ENCODE measurements at regions of chr13 and their contacts with region 1.

Region 1: GRCh38 chr13:26698392-26699196 is 62.0 kb downstream of the GPR12 start:
- DNase-seq: peak; percentile 87
- H3K4me3 ChIP-seq: peak overlapping the region in 1 of 2 experiments; percentile 15; a peak in 2 of 4 replicates
- H3K27ac ChIP-seq: no peak overlapping the region
- H3K4me1 ChIP-seq: peaks cover 0 to 4% of the 10 kb centered on the region in 2 experiments; a peak in 1 of 4 replicates
- H3K27me3 ChIP-seq: no peaks in the 10 kb centered on the region
- CTCF ChIP-seq: peak; percentile 96
- EP300 ChIP-seq: no peak
- RAD21 ChIP-seq: peak; percentile 100

Region 2: GRCh38 chr13:26186118-26186870 is 512.3 kb before region 1 on chr13:
- CTCF ChIA-PET with region 1: interaction called, 94 read pairs
- POLR2A ChIA-PET with region 1: interaction called, 3 read pairs
- DNase-seq: peak; percentile 90
- H3K4me3 ChIP-seq: peak overlapping the region; percentile 60 to 63
- H3K27ac ChIP-seq: peak overlapping the region; percentile 12 to 25; a peak in 2 of 4 replicates
- H3K4me1 ChIP-seq: peaks cover 0 to 6% of the 10 kb centered on the region in 2 experiments; a peak in 1 of 4 replicates
- H3K27me3 ChIP-seq: no peaks in the 10 kb centered on the region
- CTCF ChIP-seq: peak; percentile 62
- EP300 ChIP-seq: no peak
- RAD21 ChIP-seq: peak; percentile 37; the same call in 1 of the 2 replicates

Region 3: DNA sequence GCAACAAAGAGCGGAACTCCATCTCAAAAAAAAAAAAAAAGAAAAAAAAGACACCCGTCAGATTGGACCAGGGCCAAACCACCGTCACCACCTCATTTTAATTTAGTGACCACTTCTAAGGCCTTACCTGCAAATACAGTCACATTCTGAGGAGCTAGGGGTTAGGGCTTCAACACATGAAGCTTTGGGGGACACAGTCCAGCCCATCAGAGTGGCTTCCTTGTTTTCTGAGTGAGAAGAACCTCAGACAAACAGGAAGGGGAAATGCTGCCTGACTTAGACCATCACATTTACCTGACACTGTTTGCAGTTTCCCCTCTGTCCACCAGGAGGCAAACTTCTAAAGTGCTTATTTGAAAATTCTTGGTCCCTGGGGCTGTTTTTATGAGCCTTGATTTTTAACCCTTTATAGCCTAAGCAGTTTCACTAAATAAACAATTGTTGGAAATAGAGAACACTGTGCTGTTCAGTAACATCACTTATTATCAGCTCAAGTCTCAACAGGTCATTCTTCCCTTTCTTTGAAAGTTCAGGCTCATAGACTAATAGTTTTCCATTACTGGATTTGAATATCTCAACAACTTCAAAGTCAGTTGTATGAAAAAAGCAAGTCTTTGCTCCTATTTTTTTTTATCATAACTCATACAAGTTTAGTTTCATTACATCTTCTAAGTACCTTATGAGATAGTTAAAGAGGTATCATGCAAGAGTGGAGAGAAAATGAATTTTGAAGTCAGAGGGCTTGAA is 216.0 kb before region 1 on chr13:
- CTCF ChIA-PET with region 1: interaction called, 59 read pairs
- POLR2A ChIA-PET with region 1: interaction called, 3 read pairs
- DNase-seq: peak; percentile 81
- H3K4me3 ChIP-seq: peak overlapping the region in 1 of 2 experiments; percentile 7; a peak in 2 of 4 replicates
- H3K27ac ChIP-seq: no peak overlapping the region
- H3K4me1 ChIP-seq: peaks cover 0 to 2% of the 10 kb centered on the region in 2 experiments; a peak in 1 of 4 replicates
- H3K27me3 ChIP-seq: no peaks in the 10 kb centered on the region
- CTCF ChIP-seq: peak; percentile 93
- EP300 ChIP-seq: no peak
- RAD21 ChIP-seq: peak; percentile 73

Region 4: GRCh38 chr13:26557393-26558023 is 141.1 kb before region 1 on chr13 and contains the start of gene WASF3:
- CTCF ChIA-PET with region 1: interaction called, 22 read pairs
- POLR2A ChIA-PET with region 1: no interaction called
- DNase-seq: peak; percentile 99
- H3K4me3 ChIP-seq: peak within 1 kb of the TSS; percentile 80 to 81
- H3K27ac ChIP-seq: peak within 1 kb of the TSS; percentile 10 to 73; a peak in 3 of 4 replicates
- H3K4me1 ChIP-seq: peaks cover 0 to 23% of the 10 kb centered on the region in 2 experiments; a peak in 2 of 4 replicates
- H3K27me3 ChIP-seq: no peaks in the 10 kb centered on the region
- CTCF ChIP-seq: no peak
- EP300 ChIP-seq: no peak
- RAD21 ChIP-seq: no peak
- polyA plus RNA-seq, gene WASF3: 10.4 and 12.8 TPM in 2 replicates

Region 5: DNA sequence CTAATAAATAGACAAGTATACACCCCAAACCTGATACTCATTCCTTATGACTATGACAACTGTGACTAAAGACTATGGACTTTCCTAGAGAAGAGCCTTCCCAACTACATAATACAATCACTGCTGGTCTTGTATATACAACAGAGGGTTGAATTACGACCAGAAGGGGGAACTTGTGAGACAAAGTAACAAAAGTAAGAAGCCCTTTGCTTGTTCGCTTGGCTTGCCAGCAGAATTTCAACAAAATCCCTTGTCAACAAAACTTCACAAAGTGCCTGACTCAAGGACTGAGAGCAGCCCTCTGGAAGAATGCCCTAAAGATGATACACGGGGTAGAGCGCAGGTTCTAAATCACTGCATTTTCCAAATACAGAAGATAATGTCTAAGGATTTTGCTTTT is 41.7 kb before region 1 on chr13:
- CTCF ChIA-PET with region 1: interaction called, 22 read pairs
- POLR2A ChIA-PET with region 1: no interaction called
- DNase-seq: no peak
- H3K4me3 ChIP-seq: no peak overlapping the region
- H3K27ac ChIP-seq: peak overlapping the region in 1 of 2 experiments; percentile 86; a peak in 2 of 4 replicates
- H3K4me1 ChIP-seq: peaks cover 0 to 21% of the 10 kb centered on the region in 2 experiments; a peak in 2 of 4 replicates
- H3K27me3 ChIP-seq: no peaks in the 10 kb centered on the region
- CTCF ChIP-seq: peak; percentile 15; the same call in 1 of the 2 replicates
- EP300 ChIP-seq: no peak
- RAD21 ChIP-seq: 0 out of 2 replicates have a peak, but pooled peaks have one; percentile 15

Region 6: DNA sequence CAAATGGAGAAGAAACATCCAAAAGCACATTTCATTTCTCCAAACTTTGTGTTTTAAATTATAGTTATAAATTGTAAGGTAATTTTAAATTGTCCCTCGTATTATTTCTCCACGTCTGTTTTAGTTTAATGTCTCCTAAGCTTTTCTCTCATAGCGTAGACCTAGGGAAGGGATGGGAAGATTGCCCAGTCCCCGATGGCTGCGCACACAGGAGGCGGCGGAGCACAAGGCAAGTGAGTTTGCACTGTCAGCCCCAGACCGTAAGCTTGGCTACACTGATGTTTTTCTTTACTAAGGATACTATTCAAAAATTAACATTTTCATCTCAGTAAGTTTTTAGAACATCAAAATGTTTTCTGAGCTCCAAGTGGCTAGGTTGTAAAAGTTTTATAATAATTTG is 10.3 kb before region 1 on chr13:
- CTCF ChIA-PET with region 1: interaction called, 25 read pairs
- POLR2A ChIA-PET with region 1: no interaction called
- DNase-seq: no peak
- H3K4me3 ChIP-seq: no peak overlapping the region
- H3K27ac ChIP-seq: no peak overlapping the region
- H3K4me1 ChIP-seq: peaks cover 0 to 21% of the 10 kb centered on the region in 2 experiments; a peak in 2 of 4 replicates
- H3K27me3 ChIP-seq: no peaks in the 10 kb centered on the region
- CTCF ChIP-seq: no peak
- EP300 ChIP-seq: no peak
- RAD21 ChIP-seq: no peak

Region 7: GRCh38 chr13:27097691-27098090 is 399.1 kb after region 1 on chr13:
- CTCF ChIA-PET with region 1: no interaction called
- POLR2A ChIA-PET with region 1: no interaction called
- DNase-seq: no peak
- H3K4me3 ChIP-seq: no peak overlapping the region
- H3K27ac ChIP-seq: no peak overlapping the region
- H3K4me1 ChIP-seq: no peaks in the 10 kb centered on the region
- H3K27me3 ChIP-seq: no peaks in the 10 kb centered on the region
- CTCF ChIP-seq: no peak
- EP300 ChIP-seq: no peak
- RAD21 ChIP-seq: no peak

Measured in SK-N-SH (cell line).